PC-9 (cell line): ENCODE measurements at regions of chr7 and their contacts with region 1.

Region 1: GRCh38 chr7:74598558-74598957 is 59.0 kb upstream of the GTF2I start:
- DNase-seq: no peak
- H3K4me3 ChIP-seq: no peak overlapping the region
- H3K27ac ChIP-seq: no peak overlapping the region
- H3K4me1 ChIP-seq: no peaks in the 10 kb centered on the region
- H3K27me3 ChIP-seq: no peaks in the 10 kb centered on the region
- CTCF ChIP-seq: no peak

Region 2: DNA sequence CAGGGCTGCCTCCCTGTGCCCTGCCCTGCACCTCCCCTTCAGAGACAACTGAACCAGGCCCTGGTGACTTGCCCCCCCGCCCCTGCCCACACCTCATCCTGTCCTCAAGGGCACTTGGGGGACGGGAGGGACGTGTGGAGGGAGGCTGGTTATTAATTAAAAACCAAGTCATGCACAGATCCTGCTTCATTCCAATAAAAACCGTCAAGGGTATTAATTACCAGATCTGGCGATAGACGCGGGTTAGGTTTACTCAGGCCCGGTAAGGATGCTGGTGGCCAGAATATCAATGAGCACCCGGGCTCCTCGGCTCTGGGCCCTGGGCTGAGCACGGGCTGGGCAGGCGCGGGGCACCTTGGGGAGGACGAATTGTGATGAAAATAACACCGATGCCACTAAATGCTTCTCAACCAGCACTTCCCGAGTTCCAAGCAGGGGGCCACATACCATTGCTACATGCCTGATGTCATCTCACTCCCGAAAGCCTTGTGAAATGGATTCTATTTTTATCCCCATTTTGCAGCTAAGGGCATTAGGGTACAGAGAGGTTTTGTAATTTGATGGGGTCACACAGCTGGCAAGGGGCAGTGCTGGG is 169.3 kb before region 1 on chr7:
- CTCF ChIA-PET with region 1: no interaction called
- POLR2A ChIA-PET with region 1: no interaction called
- intact Hi-C with region 1: no loop called
- DNase-seq: no peak
- H3K4me3 ChIP-seq: no peak overlapping the region
- H3K27ac ChIP-seq: no peak overlapping the region
- H3K4me1 ChIP-seq: no peaks in the 10 kb centered on the region
- H3K27me3 ChIP-seq: no peaks in the 10 kb centered on the region
- CTCF ChIP-seq: no peak

Region 3: GRCh38 chr7:74587435-74588126 is 11.0 kb before region 1 on chr7:
- CTCF ChIA-PET with region 1: no interaction called
- POLR2A ChIA-PET with region 1: interaction called, 28 read pairs
- intact Hi-C with region 1: no loop called
- DNase-seq: peak; percentile 79 to 96
- H3K4me3 ChIP-seq: no peak overlapping the region
- H3K27ac ChIP-seq: peak overlapping the region; percentile 43
- H3K4me1 ChIP-seq: peaks cover 45% of the 10 kb centered on the region
- H3K27me3 ChIP-seq: no peaks in the 10 kb centered on the region
- CTCF ChIP-seq: no peak

Region 4: DNA sequence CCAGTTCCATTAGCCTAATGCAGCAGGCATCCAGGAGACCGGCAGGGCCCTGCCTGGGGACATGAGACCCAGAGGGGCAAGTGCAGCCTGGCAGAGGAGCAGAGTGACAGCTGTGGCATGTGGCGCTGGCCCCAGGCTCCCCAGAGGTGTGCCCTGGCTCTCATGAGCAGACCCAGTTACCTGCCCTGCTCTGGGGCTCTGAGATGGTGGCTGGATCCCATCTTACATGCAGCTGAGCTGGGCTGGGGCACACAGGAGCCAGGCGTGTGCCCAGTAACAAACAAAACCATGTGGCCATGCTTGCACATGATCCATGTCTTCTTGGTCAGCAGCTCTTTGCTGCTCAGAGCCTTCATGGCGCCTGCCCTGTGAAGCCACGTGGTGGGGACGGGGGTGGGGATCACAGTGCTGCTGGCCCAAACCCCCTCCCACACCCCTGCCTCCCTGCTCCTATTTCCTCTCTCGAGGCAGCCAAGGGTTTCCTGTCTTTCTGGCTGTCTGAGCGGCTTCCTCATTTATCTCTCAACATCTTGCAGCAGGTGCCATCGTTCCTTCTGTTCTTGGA is 18.7 kb after region 1 on chr7:
- CTCF ChIA-PET with region 1: interaction called, 18 read pairs
- POLR2A ChIA-PET with region 1: no interaction called
- intact Hi-C with region 1: no loop called
- DNase-seq: no peak
- H3K4me3 ChIP-seq: no peak overlapping the region
- H3K27ac ChIP-seq: no peak overlapping the region
- H3K4me1 ChIP-seq: peaks cover 8% of the 10 kb centered on the region
- H3K27me3 ChIP-seq: no peaks in the 10 kb centered on the region
- CTCF ChIP-seq: no peak

Region 5: DNA sequence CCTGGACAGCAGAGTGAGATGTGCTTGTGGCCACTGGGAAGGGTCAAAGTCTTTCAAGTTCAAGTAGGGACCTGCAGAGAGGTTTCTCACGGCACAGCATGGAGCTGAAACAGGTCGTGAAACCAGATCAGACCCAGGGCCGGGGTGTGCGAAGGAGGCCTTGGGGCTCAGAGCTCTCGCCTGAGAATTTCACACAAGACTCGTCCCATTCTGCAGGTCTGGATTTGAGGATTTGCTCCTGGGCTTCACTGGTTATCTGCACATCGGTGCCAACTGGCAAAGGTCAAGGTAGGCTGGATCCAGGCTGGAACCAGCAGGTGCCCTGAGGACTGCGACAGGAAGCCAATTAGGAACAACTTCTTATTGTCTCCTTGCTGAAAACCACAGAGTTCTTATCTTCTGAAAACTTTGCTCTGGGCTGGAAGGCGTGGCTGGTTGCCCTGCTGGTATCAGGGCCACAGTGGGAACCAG is 34.9 kb after region 1 on chr7:
- CTCF ChIA-PET with region 1: no interaction called
- POLR2A ChIA-PET with region 1: no interaction called
- intact Hi-C with region 1: no loop called
- DNase-seq: peak; percentile 63
- H3K4me3 ChIP-seq: no peak overlapping the region
- H3K27ac ChIP-seq: peak overlapping the region; percentile 13; the same call in 1 of the 2 replicates
- H3K4me1 ChIP-seq: peaks cover 32% of the 10 kb centered on the region
- H3K27me3 ChIP-seq: no peaks in the 10 kb centered on the region
- CTCF ChIP-seq: no peak

Region 6: DNA sequence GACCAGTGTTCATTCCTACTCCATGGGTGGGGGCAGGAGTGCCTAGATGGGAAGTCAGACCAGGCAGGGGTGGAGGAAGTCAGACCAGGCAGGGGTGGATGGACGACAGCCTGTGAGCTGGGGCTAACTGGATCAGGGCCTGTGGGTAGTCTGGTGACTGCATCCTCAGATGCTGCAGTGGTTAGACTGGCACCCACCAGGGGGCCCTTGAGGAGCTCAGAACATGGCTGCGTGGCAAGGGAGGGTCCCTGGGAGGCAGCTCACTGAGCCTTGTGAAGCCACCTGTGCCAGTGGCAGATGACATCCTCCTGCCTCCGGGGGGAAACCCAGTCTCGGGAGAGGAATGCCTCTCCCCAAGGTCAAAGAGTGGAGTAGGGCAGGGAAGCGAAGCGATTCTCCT is 440.0 kb after region 1 on chr7:
- CTCF ChIA-PET with region 1: no interaction called
- POLR2A ChIA-PET with region 1: no interaction called
- intact Hi-C with region 1: no loop called
- DNase-seq: no peak
- H3K4me3 ChIP-seq: no peak overlapping the region
- H3K27ac ChIP-seq: no peak overlapping the region
- H3K4me1 ChIP-seq: no peaks in the 10 kb centered on the region
- H3K27me3 ChIP-seq: no peaks in the 10 kb centered on the region
- CTCF ChIP-seq: no peak